Dendritic cell treated with granulocyte-macrophage colony-stimulating factor and Interleukin-4, amounts not matched to agents 40 ng/mL and 50 ng/mL, for 4 days (primary cell): ENCODE measurements at regions of chr7 and their contacts with region 1.

Region 1: DNA sequence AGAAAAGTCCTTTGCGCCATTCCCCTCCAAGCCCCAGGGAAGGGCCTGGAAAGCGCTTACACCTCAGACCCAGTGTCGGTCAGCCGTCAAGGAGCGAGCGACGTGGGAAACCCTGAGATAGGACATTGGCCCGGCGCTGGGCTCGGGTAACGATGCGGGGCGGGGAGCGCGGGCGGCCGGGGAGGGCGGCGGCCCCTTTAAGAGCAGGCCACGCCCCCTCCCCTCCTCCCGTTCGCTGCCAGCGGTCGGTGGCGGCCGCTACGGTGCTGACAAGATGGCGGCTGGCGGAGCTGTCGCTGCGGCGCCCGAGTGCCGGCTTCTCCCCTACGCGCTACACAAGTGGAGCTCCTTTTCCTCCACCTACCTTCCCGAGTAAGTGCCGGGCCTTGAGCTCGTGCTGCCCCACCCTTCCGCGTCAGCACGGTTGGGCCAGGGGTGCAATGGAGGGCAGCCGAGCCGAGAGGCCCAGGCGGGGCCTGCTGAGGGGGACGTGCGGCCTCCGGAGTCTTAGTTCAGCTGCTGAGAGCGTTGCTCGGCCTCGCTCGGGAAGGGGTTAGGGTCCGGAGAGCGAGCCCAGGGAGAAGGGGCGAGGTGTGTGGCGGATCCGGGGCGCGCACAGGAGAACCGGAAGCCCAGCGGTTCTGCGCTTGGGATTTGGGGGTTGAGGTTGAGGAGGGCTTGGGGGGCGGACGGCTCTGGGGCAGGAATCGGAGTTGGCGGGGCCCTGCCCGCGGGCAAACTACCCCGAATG is at the start of gene MKLN1:
- H3K4me3 Mint-ChIP-seq: peak within 1 kb of the TSS; percentile 96
- H3K27ac Mint-ChIP-seq: peak within 1 kb of the TSS; percentile 96
- H3K4me1 Mint-ChIP-seq: peaks cover 49% of the 10 kb centered on the region
- H3K27me3 Mint-ChIP-seq: no peaks in the 10 kb centered on the region

Region 2: DNA sequence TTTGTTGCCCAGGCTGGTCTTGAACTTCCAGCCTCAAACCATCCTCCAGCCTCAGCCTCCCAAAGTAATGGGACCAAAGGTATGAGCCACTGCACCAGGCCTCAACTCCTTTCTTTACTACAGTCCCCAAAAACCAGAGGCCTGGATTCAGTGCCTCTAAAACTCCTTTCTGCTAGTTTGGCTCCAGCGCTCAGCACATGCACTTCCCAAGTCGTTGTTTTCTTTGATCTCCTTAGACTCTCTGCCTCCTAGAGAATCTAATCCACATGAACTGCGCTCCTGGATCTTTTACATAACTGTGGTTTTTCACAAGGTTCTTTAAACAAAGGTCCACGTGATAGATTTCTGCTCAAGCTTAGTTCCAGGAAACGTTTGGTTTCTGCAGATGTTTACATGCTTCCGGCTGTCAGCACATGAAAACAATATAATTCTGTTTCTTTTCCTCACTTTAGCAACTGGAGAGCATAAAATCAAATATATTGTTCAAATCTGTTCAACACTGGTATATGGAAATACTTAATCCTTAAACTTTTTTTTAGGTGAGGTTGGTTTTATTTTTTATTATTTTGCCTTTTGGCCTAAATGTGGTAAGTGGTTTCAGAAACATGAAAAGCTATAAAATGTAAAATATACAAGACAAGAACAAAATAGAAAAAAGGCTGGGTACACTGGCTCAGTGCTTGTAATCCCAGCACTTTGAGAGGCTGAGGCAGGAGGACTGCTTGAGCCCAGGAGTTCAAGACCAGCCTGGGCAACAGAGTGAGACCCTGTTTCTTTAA is 270.6 kb before region 1 on chr7:
- intact Hi-C with region 1: no loop called
- H3K4me3 Mint-ChIP-seq: peak overlapping the region; percentile 41
- H3K27ac Mint-ChIP-seq: peak overlapping the region; percentile 79
- H3K4me1 Mint-ChIP-seq: peaks cover 29% of the 10 kb centered on the region
- H3K27me3 Mint-ChIP-seq: no peaks in the 10 kb centered on the region

Region 3: GRCh38 chr7:131231381-131232220 is 96.2 kb before region 1 on chr7:
- intact Hi-C with region 1: loop called (anchors 10 kb)
- H3K4me3 Mint-ChIP-seq: peak overlapping the region; percentile 72
- H3K27ac Mint-ChIP-seq: peak overlapping the region; percentile 90
- H3K4me1 Mint-ChIP-seq: peaks cover 40% of the 10 kb centered on the region
- H3K27me3 Mint-ChIP-seq: peaks cover 3% of the 10 kb centered on the region